ENCODE measurements at regions of chr3 and their contacts with region 1.

Region 1: GRCh38 chr3:41881233-41881821 is 80.6 kb downstream of the ULK4 start:
- DNase-seq: peak; percentile 60
- H3K4me3 ChIP-seq: no peak overlapping the region
- H3K27ac ChIP-seq: no peak overlapping the region
- H3K4me1 ChIP-seq: no peaks in the 10 kb centered on the region
- H3K27me3 ChIP-seq: no peaks in the 10 kb centered on the region
- CTCF ChIP-seq: peak; percentile 13 to 28
- POLR2A ChIP-seq: no peak

Region 2: DNA sequence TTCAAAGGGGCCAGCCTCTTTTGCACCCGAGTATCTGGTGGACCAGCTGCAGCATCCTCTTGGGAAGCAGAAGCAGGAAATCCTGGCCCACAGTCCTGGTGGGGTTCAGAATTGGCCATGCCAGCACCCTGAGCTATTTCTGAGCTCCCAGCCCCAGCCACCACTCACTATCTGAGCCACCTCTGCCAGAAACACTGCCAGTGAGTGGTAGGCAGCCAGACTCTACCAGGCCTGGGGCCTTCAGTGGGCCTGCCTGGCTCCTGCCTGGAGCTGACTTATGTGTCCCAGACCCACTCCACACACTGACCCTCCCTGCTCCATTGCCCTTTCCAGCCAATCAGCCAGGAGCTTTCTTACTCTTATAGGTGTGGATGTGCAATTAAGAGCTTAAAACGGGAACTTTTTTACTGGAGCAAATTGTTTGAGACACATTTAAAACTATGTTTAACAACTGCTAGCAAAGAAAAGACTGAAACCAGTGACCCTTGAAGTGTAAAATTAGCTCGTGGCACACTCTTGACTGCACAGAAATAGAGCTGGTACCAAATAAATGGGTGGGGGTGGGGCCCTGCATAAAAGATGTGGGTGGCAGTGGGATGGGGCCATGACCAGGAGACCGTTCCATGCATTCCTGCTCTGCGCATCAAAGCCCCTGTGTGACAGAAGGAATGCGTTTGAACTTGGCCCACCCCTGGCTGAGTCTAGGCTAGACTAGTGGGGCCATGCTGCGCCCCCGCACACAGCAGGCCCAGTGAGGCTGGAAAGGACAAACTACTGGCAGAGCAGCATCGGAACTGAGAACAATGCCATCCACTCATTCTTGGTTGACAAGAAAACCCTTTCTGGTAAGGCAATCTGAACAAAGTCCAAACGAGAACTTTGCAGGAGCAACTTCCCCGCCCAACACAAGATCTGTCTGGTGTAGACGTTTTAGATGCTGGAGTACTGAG is 634.0 kb before region 1 on chr3:
- CTCF ChIA-PET with region 1: no interaction called
- POLR2A ChIA-PET with region 1: no interaction called
- dilution Hi-C with region 1: no loop called
- intact Hi-C with region 1: loop called (anchors 5 kb)
- DNase-seq: no peak
- H3K4me3 ChIP-seq: no peak overlapping the region
- H3K27ac ChIP-seq: no peak overlapping the region
- H3K4me1 ChIP-seq: no peaks in the 10 kb centered on the region
- H3K27me3 ChIP-seq: no peaks in the 10 kb centered on the region
- CTCF ChIP-seq: no peak
- POLR2A ChIP-seq: no peak

Region 3: GRCh38 chr3:41701191-41701698 is 180.1 kb before region 1 on chr3:
- CTCF ChIA-PET with region 1: no interaction called
- POLR2A ChIA-PET with region 1: no interaction called
- dilution Hi-C with region 1: no loop called
- intact Hi-C with region 1: loop called (anchors 5 kb)
- DNase-seq: peak; percentile 36
- H3K4me3 ChIP-seq: no peak overlapping the region
- H3K27ac ChIP-seq: no peak overlapping the region
- H3K4me1 ChIP-seq: peaks cover 8% of the 10 kb centered on the region
- H3K27me3 ChIP-seq: no peaks in the 10 kb centered on the region
- CTCF ChIP-seq: no peak
- POLR2A ChIP-seq: no peak